ENCODE measurements at regions of chr2 and their contacts with region 1.

Region 1: GRCh38 chr2:68157402-68158133 is at the start of gene PNO1:
- DNase-seq: peak; percentile 94
- ATAC-seq: peak; percentile 95
- H3K4me3 Mint-ChIP-seq: peak within 1 kb of the TSS; percentile 99
- H3K27ac Mint-ChIP-seq: peak within 1 kb of the TSS; percentile 100
- H3K4me1 Mint-ChIP-seq: peaks cover 55% of the 10 kb centered on the region
- H3K27me3 Mint-ChIP-seq: no peaks in the 10 kb centered on the region
- CTCF ChIP-seq: no peak
- total RNA-seq, gene PNO1: 22.1 and 24.9 TPM in 2 replicates

Region 2: DNA sequence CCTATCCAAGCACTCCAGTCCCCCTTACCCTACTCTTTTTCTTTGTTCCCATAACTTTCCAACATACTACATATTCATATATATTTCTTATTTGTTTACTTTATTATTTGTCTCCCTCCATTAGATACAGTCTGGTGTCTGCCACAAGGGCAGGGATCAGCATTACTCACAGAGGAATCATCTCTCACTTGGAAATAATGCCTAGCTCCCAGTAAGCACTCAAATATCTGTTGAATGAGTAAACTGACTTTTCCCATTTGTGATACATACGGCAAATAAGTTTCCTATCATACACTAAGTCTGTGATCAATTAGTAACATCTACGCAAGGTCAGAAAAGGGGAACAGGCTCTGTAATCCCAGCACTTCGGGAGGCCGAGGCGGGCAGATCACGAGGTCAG is 113.5 kb before region 1 on chr2:
- CTCF ChIA-PET with region 1: no interaction called
- POLR2A ChIA-PET with region 1: no interaction called
- intact Hi-C with region 1: no loop called
- DNase-seq: no peak
- ATAC-seq: no peak
- H3K4me3 Mint-ChIP-seq: no peak overlapping the region
- H3K27ac Mint-ChIP-seq: no peak overlapping the region
- H3K4me1 Mint-ChIP-seq: peaks cover 4% of the 10 kb centered on the region
- H3K27me3 Mint-ChIP-seq: no peaks in the 10 kb centered on the region
- CTCF ChIP-seq: no peak

Region 3: DNA sequence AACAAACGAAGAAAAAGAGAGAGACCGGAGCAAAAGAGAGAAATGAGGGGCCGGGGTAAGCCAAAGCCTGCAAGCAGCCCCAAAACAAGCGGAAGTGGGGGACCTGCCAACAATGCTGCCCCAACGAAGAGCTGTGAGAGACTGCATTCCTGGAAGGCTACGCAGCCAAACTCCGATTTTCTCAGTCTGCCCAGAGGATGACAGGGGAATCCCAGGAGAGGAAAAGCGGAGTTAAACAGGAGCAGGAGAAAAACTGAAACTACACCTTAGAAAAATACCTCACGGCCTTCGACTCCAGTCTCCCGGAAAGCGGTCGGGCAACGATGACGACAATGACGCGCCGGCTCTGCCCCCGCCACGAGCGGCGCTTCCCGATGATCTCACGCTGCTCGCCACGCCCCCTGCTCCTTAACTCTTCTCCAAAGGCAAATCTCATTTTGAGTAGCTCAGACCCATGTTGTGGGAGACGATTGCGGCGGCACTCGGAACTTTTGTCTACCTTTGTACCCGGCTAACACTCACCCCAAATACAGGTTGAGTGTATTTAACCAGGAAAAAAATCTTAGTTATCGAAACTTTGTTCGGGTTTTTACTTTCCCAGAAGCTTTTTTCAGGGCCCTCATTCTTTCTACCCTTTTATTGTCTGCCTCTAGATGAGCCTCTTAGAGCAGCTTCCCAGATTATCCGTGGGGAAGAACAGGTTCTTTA is 94.7 kb before region 1 on chr2 and contains the start of gene C1D:
- CTCF ChIA-PET with region 1: no interaction called
- POLR2A ChIA-PET with region 1: interaction called, 8 read pairs
- intact Hi-C with region 1: loop called (anchors 1 kb)
- DNase-seq: peak; percentile 94
- ATAC-seq: peak; percentile 92
- H3K4me3 Mint-ChIP-seq: peak within 1 kb of the TSS; percentile 93
- H3K27ac Mint-ChIP-seq: peak within 1 kb of the TSS; percentile 95
- H3K4me1 Mint-ChIP-seq: peaks cover 41% of the 10 kb centered on the region
- H3K27me3 Mint-ChIP-seq: peaks cover 2% of the 10 kb centered on the region
- CTCF ChIP-seq: no peak
- total RNA-seq, gene C1D: 21.5 and 25.2 TPM in 2 replicates

Region 4: GRCh38 chr2:68172990-68173700 is 15.6 kb after region 1 on chr2:
- CTCF ChIA-PET with region 1: no interaction called
- POLR2A ChIA-PET with region 1: interaction called, 9 read pairs
- intact Hi-C with region 1: loop called (anchors 2 kb)
- DNase-seq: no peak
- ATAC-seq: peak; percentile 58
- H3K4me3 Mint-ChIP-seq: peak overlapping the region; percentile 41
- H3K27ac Mint-ChIP-seq: peak overlapping the region; percentile 41
- H3K4me1 Mint-ChIP-seq: peaks cover 33% of the 10 kb centered on the region
- H3K27me3 Mint-ChIP-seq: no peaks in the 10 kb centered on the region
- CTCF ChIP-seq: no peak

Region 5: GRCh38 chr2:68203587-68203986 is 46.0 kb after region 1 on chr2:
- CTCF ChIA-PET with region 1: no interaction called
- POLR2A ChIA-PET with region 1: no interaction called
- intact Hi-C with region 1: no loop called
- DNase-seq: no peak
- ATAC-seq: peak; percentile 78
- H3K4me3 Mint-ChIP-seq: peak overlapping the region; percentile 76
- H3K27ac Mint-ChIP-seq: peak overlapping the region; percentile 88
- H3K4me1 Mint-ChIP-seq: peaks cover 72% of the 10 kb centered on the region
- H3K27me3 Mint-ChIP-seq: no peaks in the 10 kb centered on the region
- CTCF ChIP-seq: no peak

Region 6: DNA sequence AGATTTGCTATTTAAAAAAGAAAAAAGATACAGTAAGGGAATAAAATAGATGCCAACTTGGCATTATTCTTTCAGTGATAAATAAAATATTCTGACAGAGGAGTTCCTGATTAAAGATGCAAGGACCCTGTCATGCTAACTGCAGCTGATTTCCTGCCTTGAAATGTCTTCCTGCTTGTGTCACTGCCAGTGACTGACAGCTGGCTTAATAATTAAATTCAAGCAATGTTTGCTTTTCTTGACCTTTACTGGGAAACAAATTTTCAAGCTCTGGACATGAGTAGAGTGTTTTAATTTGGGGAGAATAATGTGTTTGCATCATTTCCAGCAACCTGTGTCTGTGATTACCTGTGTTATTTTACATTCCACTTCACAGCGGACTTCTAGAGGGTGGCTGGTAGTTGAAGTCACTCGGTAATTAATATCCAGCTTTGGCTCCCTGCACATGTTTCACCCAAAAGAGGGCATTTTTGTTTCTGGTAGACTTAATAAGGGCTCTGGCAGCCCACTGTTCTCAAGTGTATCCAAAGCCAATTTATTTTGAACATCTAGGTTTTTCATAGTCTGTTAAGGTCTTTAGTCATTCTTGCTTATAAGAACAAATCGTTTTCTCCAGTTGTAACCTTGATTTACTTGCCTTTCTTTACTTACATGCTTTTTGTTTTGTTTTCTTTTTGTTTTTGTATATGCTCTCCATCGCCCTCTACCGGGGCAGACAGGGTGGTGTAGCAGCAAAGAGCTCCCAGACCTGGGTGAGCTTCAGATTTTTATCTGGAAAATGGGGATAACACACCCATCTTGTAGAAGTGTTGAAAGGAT is 437.3 kb after region 1 on chr2:
- CTCF ChIA-PET with region 1: no interaction called
- POLR2A ChIA-PET with region 1: no interaction called
- intact Hi-C with region 1: no loop called
- DNase-seq: peak; percentile 21
- ATAC-seq: peak; percentile 52
- H3K4me3 Mint-ChIP-seq: peak overlapping the region; percentile 0
- H3K27ac Mint-ChIP-seq: no peak overlapping the region
- H3K4me1 Mint-ChIP-seq: peaks cover 12% of the 10 kb centered on the region
- H3K27me3 Mint-ChIP-seq: peaks cover 5% of the 10 kb centered on the region
- CTCF ChIP-seq: peak; percentile 64

Measured in activated B cell treated with CpG ODN at 0.5 μM for 24 hours (primary cell).